ENCODE measurements at regions of chr6 and their contacts with region 1.

Region 1: DNA sequence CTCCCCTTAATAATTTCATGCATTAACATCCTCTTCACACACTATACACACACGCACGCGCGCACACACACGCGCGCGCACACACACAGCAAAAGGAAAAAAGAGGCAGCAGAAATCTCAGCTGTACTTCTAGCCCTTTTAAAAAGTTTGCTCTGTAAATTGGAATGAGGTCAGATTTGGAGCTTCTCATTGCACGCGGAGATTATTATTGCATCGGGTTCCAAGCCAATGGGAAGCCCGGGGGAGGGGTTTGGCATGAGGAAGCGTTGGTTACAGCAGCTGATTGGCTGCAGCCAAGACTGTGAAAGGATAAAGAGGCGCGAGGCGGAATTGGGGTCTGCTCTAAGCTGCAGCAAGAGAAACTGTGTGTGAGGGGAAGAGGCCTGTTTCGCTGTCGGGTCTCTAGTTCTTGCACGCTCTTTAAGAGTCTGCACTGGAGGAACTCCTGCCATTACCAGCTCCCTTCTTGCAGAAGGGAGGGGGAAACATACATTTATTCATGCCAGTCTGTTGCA is at the start of gene SOX4:
- DNase-seq: peak; percentile 95
- ATAC-seq: peak; percentile 84
- H3K4me3 ChIP-seq: peak within 1 kb of the TSS; percentile 15 to 77
- H3K27ac ChIP-seq: peak within 1 kb of the TSS; percentile 78 to 91
- H3K4me1 ChIP-seq: no peaks in the 10 kb centered on the region
- H3K27me3 ChIP-seq: no peaks in the 10 kb centered on the region
- total RNA-seq, gene SOX4: 16.0 to 25.2 TPM

Region 2: DNA sequence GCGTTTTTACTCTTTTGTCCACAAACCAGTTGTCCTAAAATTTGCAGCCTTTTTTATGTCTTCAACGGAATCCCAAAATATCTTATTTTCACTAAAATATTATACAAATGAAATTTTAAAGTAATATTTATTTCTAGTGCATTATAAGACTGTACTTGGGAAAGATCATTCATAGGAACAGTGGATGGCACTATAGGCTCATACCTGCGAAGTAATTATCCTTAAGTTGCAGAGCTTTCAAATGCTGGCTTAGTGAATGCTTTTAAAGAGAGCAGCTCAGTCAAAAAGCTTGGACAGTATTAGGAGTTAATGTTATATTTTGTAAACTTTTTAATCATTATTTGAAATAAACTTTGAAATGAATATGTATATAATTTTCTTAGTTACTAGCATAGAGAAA is 804.3 kb before region 1 on chr6:
- intact Hi-C with region 1: loop called in 1 of 2 experiments (anchors 10 kb)
- DNase-seq: no peak
- ATAC-seq: no peak
- H3K4me3 ChIP-seq: no peak overlapping the region
- H3K27ac ChIP-seq: no peak overlapping the region
- H3K4me1 ChIP-seq: no peaks in the 10 kb centered on the region
- H3K27me3 ChIP-seq: no peaks in the 10 kb centered on the region

Region 3: GRCh38 chr6:21033575-21034026 is 559.9 kb before region 1 on chr6:
- intact Hi-C with region 1: loop called in 1 of 2 experiments (anchors 5 kb)
- DNase-seq: peak; percentile 65 to 75
- ATAC-seq: peak; percentile 75
- H3K4me3 ChIP-seq: peak overlapping the region in 1 of 2 donors; percentile 41
- H3K27ac ChIP-seq: peak overlapping the region in 1 of 2 donors; percentile 36
- H3K4me1 ChIP-seq: peaks cover 0 to 3% of the 10 kb centered on the region in 2 donors
- H3K27me3 ChIP-seq: no peaks in the 10 kb centered on the region

Region 4: GRCh38 chr6:21426832-21427490 is 166.5 kb before region 1 on chr6:
- intact Hi-C with region 1: no loop called
- DNase-seq: no peak
- ATAC-seq: no peak
- H3K4me3 ChIP-seq: no peak overlapping the region
- H3K27ac ChIP-seq: no peak overlapping the region
- H3K4me1 ChIP-seq: no peaks in the 10 kb centered on the region
- H3K27me3 ChIP-seq: no peaks in the 10 kb centered on the region

Region 5: DNA sequence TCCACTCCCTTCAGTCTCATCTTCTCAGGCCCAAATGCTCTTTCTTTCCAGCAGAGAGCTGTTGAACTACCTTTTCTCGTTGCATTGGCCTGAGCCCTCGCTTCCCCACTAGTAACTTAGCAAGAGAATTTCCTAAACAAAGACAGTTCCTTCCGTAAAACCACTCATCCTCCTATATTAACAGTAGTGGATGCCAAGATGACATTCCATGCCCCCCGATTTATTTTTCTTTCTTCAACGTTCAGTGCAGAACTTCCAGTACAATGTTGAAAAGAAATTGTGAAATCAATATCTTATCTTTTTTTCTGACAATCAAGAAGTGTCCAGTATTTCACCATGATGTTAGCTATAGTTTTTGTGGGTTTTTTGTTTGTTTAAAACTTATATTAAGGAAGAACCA is 45.8 kb after region 1 on chr6:
- intact Hi-C with region 1: no loop called
- DNase-seq: no peak
- ATAC-seq: no peak
- H3K4me3 ChIP-seq: no peak overlapping the region
- H3K27ac ChIP-seq: no peak overlapping the region
- H3K4me1 ChIP-seq: no peaks in the 10 kb centered on the region
- H3K27me3 ChIP-seq: no peaks in the 10 kb centered on the region

Region 6: GRCh38 chr6:21885532-21886114 is 292.2 kb after region 1 on chr6:
- intact Hi-C with region 1: loop called (anchors 1 to 10 kb)
- DNase-seq: peak; percentile 82 to 84
- ATAC-seq: peak; percentile 90
- H3K4me3 ChIP-seq: no peak overlapping the region
- H3K27ac ChIP-seq: peak overlapping the region; percentile 84 to 97
- H3K4me1 ChIP-seq: peaks cover 8 to 18% of the 10 kb centered on the region in 2 donors
- H3K27me3 ChIP-seq: no peaks in the 10 kb centered on the region

Region 7: DNA sequence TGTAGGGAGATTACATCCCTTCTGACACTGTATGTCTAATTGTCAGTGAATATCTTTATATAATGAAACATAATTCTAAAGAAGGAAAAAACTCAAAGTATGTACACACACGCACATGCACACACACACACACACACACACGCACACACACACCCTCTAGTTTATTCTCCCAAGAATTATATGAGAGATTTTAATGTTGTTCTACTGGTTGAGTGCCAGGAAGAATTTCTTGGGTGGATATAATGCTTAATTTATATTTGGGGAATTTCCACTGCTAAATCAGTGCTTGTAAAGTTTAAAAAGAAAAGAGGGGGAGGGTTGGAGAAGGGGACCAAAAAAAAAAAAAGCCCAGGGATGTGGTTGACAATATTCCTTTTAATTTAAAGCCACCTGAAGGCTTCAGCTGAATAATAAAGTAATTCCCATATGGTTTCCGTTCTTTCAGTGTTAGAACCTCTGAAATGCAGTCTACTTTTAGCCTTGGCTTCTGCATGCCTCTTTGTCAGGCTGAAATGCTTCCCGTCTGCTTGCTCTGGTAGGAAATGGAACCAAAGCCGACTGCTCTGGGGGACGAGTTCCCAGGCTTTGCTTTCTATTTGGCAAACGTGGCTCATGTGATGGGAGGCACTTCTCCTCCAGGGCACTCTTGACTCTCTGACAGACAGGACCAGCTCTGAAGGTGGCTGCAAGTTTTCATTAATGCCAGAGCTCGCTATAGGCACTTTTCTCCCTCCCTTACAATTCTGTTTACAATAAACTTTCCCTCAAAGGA is 478.0 kb after region 1 on chr6:
- intact Hi-C with region 1: loop called in 1 of 2 experiments (anchors 10 kb)
- DNase-seq: peak in 1 of 2 donors; percentile 59
- ATAC-seq: peak; percentile 73
- H3K4me3 ChIP-seq: peak overlapping the region; percentile 9 to 59
- H3K27ac ChIP-seq: peak overlapping the region in 1 of 2 donors; percentile 71
- H3K4me1 ChIP-seq: peaks cover 0 to 1% of the 10 kb centered on the region in 2 donors
- H3K27me3 ChIP-seq: no peaks in the 10 kb centered on the region